A673 (cell line): ENCODE measurements at regions of chr2 and their contacts with region 1.

Region 1: DNA sequence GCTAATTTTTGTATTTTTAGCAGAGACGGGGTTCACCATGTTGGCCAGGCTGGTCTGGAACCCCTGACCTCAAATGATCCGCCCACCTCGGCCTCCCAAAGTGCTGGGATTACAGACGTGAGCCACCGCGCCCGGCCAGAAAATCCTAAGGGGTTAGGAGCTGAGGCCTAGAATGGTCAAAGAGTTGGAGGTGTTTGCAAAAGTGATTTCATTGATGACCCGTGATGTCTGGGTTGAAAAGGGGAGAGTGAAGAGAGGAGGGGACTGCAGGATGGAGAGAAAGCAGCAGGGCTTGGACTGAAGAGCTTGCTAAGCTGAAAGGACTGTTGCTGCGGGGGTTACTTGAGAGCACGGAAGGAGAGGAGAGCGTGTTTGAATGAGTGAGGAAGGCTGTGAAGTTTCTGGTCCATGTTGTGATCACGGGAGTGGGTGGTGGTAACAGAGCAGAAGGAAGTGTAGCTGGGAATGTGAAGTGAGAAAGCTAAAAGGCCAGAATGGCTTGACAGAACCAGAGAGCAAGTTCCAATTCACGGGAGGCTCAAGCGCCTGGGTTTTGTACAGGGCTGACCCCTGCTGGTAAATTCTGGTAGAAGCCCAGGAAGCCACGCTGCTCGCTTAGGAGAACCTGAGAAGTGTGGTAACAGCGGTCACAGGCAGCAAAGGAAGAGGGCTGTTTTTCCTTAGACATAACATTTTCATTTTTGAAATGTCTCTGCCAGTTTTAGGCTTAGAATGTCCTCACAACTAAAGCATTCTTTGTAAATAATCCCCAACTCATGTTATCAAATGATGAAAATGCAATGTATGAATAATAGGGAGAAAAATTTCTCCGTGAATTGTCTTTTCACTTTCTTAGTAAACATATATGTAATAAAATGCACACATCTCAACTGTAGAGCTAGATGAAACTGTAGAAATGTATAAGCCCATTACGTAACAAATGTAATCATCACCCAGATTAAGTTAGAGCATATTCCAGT is 40.5 kb upstream of the ACTR2 start:
- DNase-seq: peak; percentile 82
- H3K4me3 ChIP-seq: no peak overlapping the region
- H3K27ac ChIP-seq: no peak overlapping the region
- H3K4me1 ChIP-seq: no peaks in the 10 kb centered on the region
- H3K27me3 ChIP-seq: peaks cover 9% of the 10 kb centered on the region
- CTCF ChIP-seq: peak; percentile 85

Region 2: DNA sequence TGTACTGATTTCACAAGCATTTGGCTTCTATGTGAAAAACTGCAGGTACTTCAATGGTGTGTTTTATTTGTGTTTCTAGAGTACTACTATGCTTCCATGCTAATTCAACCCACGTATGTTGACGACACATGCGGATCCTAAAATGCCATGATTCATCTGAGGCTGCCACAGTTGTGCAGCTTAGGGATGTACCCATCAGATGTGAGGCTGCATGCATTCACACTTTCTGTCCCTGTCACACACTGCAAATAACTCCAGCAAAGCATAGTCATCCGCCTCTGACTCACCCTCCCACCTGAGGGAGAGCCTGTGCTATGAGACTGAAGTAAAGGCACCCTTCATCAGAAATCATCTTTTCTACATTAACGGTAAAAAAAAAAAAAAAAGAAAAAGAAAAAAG is 511.3 kb before region 1 on chr2:
- CTCF ChIA-PET with region 1: no interaction called
- POLR2A ChIA-PET with region 1: no interaction called
- intact Hi-C with region 1: no loop called
- DNase-seq: no peak
- H3K4me3 ChIP-seq: no peak overlapping the region
- H3K27ac ChIP-seq: no peak overlapping the region
- H3K4me1 ChIP-seq: no peaks in the 10 kb centered on the region
- H3K27me3 ChIP-seq: no peaks in the 10 kb centered on the region
- CTCF ChIP-seq: no peak

Region 3: GRCh38 chr2:65159906-65160305 is 27.3 kb before region 1 on chr2:
- CTCF ChIA-PET with region 1: no interaction called
- POLR2A ChIA-PET with region 1: no interaction called
- intact Hi-C with region 1: loop called (anchors 2 kb)
- DNase-seq: no peak
- H3K4me3 ChIP-seq: no peak overlapping the region
- H3K27ac ChIP-seq: no peak overlapping the region
- H3K4me1 ChIP-seq: no peaks in the 10 kb centered on the region
- H3K27me3 ChIP-seq: no peaks in the 10 kb centered on the region
- CTCF ChIP-seq: no peak